CD4-positive, alpha-beta T cell (primary cell): ENCODE measurements at regions of chr22 and their contacts with region 1.

Region 1: DNA sequence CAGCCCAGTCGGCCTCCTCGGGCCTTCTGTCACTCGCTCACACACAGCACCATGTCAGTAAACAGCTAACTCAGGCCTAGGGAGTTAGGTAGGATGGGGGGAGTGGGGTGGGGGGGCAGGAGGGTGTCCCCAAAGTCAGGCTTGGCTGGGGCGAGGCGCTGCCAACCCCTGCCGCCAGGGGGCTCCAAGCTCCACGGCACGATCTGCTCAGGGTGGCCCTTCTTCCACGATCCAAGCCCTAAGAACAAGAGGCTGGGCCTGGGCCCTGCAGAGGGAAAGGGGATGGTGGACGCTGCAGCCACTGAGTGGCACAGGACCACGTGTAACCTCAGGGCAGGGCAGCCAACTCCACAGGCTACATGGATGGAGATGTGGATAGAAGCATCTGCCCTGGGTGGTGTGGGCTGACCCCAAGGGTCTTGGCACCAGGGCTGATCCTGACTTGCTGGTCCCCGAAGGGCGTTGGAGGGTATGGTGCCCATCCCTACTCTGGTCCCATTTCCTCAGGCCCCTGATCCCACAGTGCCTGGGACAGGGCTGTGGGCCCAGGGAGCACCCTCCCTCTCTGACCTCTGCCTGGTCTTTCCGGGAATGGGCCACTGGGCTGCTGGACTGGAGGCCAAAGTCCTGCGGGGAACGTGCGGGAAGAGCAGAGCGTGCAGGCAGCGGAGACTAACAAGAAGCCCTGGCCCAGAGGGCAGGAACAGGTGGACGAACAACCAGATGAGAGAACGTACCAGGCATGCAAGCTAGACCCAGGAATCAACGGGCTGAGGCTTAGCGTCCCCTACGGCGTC is 29.1 kb upstream of the TXNRD2 start:
- DNase-seq: peak; percentile 59 to 85 (median 76)
- ATAC-seq: peak; percentile 87
- H3K4me3 ChIP-seq: no peak overlapping the region
- H3K4me3 Mint-ChIP-seq: no peak overlapping the region
- H3K27ac ChIP-seq: no peak overlapping the region
- H3K27ac Mint-ChIP-seq: no peak overlapping the region
- H3K4me1 ChIP-seq: peaks cover 18% of the 10 kb centered on the region
- H3K4me1 Mint-ChIP-seq: peaks cover 16% of the 10 kb centered on the region
- H3K27me3 ChIP-seq: no peaks in the 10 kb centered on the region
- H3K27me3 Mint-ChIP-seq: no peaks in the 10 kb centered on the region
- CTCF ChIP-seq: peak; percentile 90

Region 2: DNA sequence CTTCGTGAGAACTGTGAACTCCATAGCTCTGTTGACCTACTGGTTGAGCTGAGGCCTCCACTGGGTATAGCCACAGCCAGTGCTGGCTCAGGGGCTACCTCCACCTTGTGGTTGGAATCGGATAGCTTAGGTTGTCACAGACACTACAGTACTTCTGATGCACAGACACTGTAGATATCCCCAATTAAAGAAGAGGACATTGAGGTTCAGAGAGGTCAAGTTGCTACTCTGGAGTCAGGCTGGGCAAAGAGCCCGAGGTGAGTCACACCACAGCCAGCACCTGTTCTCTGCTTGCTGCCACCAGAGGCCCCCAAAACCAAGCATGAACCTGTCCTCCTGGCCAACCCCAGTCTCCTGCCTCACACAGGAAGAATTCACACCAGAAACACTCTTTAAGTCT is 497.1 kb before region 1 on chr22:
- CTCF ChIA-PET with region 1: no interaction called
- POLR2A ChIA-PET with region 1: no interaction called
- intact Hi-C with region 1: no loop called
- DNase-seq: no peak
- ATAC-seq: no peak
- H3K4me3 ChIP-seq: no peak overlapping the region
- H3K4me3 Mint-ChIP-seq: no peak overlapping the region
- H3K27ac ChIP-seq: no peak overlapping the region
- H3K27ac Mint-ChIP-seq: no peak overlapping the region
- H3K4me1 ChIP-seq: peaks cover 16% of the 10 kb centered on the region
- H3K4me1 Mint-ChIP-seq: peaks cover 22% of the 10 kb centered on the region
- H3K27me3 ChIP-seq: no peaks in the 10 kb centered on the region
- H3K27me3 Mint-ChIP-seq: no peaks in the 10 kb centered on the region
- CTCF ChIP-seq: no peak

Region 3: DNA sequence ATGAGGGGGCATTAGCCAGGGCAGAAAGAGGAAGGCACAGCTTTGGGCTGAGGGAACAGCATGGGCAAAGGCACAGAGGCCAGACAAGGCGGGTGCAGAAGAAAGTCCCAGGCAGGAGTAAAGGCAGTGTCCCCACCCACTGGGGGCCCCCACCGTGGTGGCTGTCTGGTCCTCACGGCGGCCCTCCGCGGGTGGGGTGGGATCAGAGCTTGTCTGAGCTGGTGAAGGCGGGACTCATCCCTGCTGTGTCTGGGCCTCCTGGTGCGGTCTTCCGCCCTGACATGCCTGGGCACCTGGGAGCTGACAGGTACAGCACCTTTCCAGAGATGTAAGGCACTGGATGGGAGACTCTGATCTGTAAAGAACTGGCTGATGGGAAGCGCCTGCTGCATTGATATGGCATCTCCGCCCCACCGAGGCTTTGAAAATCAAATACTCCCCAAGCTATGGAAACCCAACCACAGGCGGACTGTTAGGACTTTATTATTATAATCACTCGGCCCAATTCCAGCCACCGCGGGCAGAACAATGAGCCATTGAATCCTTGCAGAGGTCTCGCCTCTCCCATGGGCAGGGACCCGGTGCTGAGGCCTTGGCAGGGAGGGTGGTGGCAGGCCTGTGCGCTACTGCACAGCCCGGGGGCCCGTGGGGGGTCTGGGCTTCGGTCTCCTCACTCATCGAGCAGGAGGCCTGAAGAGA is 101.8 kb before region 1 on chr22:
- CTCF ChIA-PET with region 1: no interaction called
- POLR2A ChIA-PET with region 1: no interaction called
- intact Hi-C with region 1: no loop called
- DNase-seq: peak in 1 of 14 experiments; percentile 28
- ATAC-seq: no peak
- H3K4me3 ChIP-seq: no peak overlapping the region
- H3K4me3 Mint-ChIP-seq: no peak overlapping the region
- H3K27ac ChIP-seq: no peak overlapping the region
- H3K27ac Mint-ChIP-seq: no peak overlapping the region
- H3K4me1 ChIP-seq: peaks cover 11% of the 10 kb centered on the region
- H3K4me1 Mint-ChIP-seq: peaks cover 7% of the 10 kb centered on the region
- H3K27me3 ChIP-seq: no peaks in the 10 kb centered on the region
- H3K27me3 Mint-ChIP-seq: no peaks in the 10 kb centered on the region
- CTCF ChIP-seq: no peak

Region 4: GRCh38 chr22:19886601-19887255 is 83.9 kb before region 1 on chr22:
- CTCF ChIA-PET with region 1: no interaction called
- POLR2A ChIA-PET with region 1: no interaction called
- intact Hi-C with region 1: no loop called
- DNase-seq: peak in 13 of 14 experiments; percentile 27 to 76 (median 56)
- ATAC-seq: peak; percentile 60
- H3K4me3 ChIP-seq: no peak overlapping the region
- H3K4me3 Mint-ChIP-seq: peak overlapping the region; percentile 76
- H3K27ac ChIP-seq: peak overlapping the region; percentile 63 to 90
- H3K27ac Mint-ChIP-seq: peak overlapping the region; percentile 97
- H3K4me1 ChIP-seq: peaks cover 88% of the 10 kb centered on the region
- H3K4me1 Mint-ChIP-seq: peaks cover 63% of the 10 kb centered on the region
- H3K27me3 ChIP-seq: no peaks in the 10 kb centered on the region
- H3K27me3 Mint-ChIP-seq: no peaks in the 10 kb centered on the region
- CTCF ChIP-seq: no peak

Region 5: DNA sequence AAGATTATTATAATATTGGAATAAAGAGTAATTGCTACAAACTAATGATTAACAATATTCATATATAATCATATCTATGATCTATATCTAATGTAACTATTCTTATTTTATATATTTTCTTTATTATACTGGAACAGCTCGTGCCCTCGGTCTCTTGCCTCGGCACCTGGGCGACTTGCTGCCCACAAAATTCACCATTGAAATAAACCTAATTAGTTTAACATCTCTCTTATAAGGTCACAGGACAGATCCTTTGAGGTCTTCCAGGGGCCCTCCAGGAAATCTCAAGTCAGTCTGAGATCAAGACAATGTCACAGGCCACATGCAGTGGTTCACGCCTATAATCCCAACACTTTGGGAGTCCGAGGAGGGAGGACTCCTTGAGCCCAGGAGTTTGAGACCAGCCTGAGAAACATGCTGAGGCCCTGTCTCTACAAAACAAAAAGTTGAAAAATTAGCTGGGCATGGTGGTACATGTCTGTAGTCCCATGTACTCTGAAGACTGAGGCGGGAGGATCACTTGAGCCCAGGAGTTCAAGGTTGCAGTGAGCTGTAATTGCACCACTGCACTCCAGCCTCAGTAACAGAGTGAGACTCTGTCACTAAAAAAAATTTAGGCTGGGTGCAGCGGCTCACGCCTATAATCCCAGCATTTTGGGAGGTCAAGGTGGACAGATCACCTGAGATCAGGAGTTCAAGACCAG is 22.5 kb before region 1 on chr22:
- CTCF ChIA-PET with region 1: no interaction called
- POLR2A ChIA-PET with region 1: no interaction called
- intact Hi-C with region 1: no loop called
- DNase-seq: no peak
- ATAC-seq: no peak
- H3K4me3 ChIP-seq: no peak overlapping the region
- H3K4me3 Mint-ChIP-seq: no peak overlapping the region
- H3K27ac ChIP-seq: no peak overlapping the region
- H3K27ac Mint-ChIP-seq: no peak overlapping the region
- H3K4me1 ChIP-seq: peaks cover 20% of the 10 kb centered on the region
- H3K4me1 Mint-ChIP-seq: peaks cover 24% of the 10 kb centered on the region
- H3K27me3 ChIP-seq: no peaks in the 10 kb centered on the region
- H3K27me3 Mint-ChIP-seq: no peaks in the 10 kb centered on the region
- CTCF ChIP-seq: peak; percentile 57

Region 6: DNA sequence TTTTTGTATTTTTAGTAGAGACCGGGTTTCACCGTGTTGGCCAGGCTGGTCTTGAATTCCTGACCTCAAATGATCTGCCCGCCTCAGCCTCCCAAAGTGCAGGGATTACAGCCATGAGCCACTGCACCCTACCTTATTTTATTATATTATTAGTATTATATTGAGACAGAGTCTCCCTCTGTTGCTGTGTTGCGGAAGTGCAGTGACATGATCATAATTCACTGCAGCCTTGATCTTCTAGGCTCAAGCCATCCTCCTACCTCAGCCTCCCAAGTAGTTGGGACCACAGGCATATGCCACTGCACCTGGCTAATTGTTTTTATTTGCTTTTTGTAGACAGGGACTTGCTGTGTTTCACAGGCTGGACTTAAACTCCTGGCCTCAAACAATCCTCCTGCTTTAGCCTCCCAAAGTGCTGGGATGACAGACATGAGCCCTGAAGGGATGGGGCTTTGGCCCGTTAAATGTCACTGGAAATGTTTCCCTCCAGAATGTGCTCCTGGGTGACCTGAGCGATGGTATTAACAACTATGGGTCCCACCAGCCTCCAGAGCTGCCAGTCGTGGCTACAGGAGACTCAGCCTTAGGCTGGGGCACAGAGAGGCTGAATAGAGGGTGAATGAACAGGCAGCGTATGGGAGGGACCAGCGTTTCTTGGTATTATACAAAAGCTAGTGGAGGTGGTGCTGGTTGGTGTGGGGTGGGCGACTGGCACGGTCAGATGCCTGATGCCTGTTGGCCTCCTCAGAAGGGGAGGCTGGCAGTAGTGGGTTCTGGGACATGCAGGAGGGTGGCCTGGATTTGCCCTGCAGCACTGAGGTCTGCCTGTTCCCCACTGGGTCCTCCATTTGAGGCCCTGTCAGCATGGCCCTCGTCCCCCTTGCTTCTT is 57.5 kb after region 1 on chr22:
- CTCF ChIA-PET with region 1: interaction called, 3 read pairs
- POLR2A ChIA-PET with region 1: no interaction called
- intact Hi-C with region 1: loop called in 1 of 2 experiments (anchors 5 kb)
- DNase-seq: peak in 3 of 14 experiments; percentile 20 to 36 (median 28)
- ATAC-seq: no peak
- H3K4me3 ChIP-seq: no peak overlapping the region
- H3K4me3 Mint-ChIP-seq: no peak overlapping the region
- H3K27ac ChIP-seq: no peak overlapping the region
- H3K27ac Mint-ChIP-seq: no peak overlapping the region
- H3K4me1 ChIP-seq: peaks cover 41% of the 10 kb centered on the region
- H3K4me1 Mint-ChIP-seq: peaks cover 31% of the 10 kb centered on the region
- H3K27me3 ChIP-seq: no peaks in the 10 kb centered on the region
- H3K27me3 Mint-ChIP-seq: no peaks in the 10 kb centered on the region
- CTCF ChIP-seq: peak; percentile 24

Region 7: DNA sequence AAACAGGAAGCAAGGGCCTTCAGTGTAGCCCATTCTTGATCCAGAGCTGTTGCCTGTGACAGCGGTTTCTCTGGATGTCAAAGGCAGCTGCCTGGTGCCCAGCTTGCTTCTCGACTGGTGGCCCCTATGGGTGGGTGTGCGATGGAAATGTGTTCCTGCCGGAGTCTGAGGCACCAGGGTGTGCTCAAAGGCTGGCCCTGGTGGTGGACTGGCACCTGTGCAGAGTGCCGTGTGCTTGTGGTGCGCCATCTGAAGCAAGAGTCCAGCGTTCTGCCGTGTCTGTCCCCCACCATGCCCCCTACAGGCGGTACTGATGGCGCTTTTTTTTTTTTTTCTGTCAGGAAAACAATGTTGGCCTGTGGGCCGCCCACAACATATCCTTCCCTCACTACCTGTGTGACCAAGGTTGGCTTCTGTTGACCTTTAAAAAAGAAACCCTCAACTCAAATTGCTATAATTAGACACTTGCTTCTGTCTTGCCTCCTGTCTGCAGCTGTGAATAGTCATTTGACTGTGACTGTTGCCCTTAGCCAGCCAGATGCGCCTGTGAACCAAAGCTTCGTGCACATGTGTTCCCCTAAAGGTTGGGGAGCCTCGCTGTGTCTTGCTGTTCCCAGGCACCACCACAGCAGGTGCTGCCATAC is 140.5 kb after region 1 on chr22:
- CTCF ChIA-PET with region 1: interaction called, 6 read pairs
- POLR2A ChIA-PET with region 1: no interaction called
- intact Hi-C with region 1: loop called in 1 of 2 experiments (anchors 5 kb)
- DNase-seq: peak in 3 of 14 experiments; percentile 35 to 76 (median 65)
- ATAC-seq: peak; percentile 70
- H3K4me3 ChIP-seq: no peak overlapping the region
- H3K4me3 Mint-ChIP-seq: no peak overlapping the region
- H3K27ac ChIP-seq: no peak overlapping the region
- H3K27ac Mint-ChIP-seq: peak overlapping the region; percentile 69
- H3K4me1 ChIP-seq: peaks cover 41% of the 10 kb centered on the region
- H3K4me1 Mint-ChIP-seq: peaks cover 11% of the 10 kb centered on the region
- H3K27me3 ChIP-seq: peaks cover 0 to 5% of the 10 kb centered on the region in 2 experiments
- H3K27me3 Mint-ChIP-seq: no peaks in the 10 kb centered on the region
- CTCF ChIP-seq: peak; percentile 46